ENCODE measurements at regions of chr12 and their contacts with region 1.

Region 1: DNA sequence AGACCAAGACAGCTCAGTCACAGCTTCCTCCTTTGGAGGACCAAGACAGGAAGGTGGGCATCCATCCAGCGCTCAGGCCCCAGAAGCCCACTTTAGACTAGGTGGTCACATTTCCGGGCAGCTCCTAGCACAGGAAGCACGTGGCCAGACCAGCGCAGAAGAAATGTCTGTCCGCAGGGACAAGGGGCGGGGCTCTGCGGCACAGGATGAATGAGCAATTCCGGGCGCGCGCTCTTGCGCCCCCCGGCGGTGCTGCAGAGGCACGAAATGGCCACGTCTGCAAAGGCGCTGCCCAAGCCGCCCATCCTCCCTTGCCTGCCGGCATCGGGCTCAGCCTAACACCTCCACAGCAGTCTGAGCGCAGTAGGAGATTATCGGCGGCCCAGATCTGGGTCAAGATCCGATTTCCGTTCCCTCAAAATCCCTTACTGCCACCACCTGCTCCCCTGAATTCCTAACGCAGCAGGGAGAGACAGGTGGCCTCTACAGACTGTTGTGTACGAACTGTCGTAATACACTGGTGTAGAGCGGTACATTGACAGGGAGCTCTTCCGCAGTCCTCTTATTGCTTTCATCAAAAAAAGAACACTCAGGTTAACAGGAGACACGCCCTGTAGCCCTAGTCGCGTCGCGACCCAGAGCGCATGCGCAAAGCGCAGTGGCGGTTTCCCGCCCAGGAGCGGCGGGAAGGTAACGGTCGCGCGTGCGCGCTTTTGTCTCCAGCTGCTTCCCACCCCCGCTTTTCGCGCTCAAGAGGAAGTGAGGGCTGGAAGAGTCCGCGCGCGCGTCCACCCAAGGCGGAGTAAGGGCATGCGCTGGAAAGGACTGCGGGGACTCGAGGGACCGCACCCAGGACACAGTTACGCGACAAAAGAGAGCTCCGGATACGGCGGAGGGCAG is 794 bp downstream of the TUBA1B start:
- DNase-seq: peak; percentile 85 to 98 (median 93)
- ATAC-seq: peak; percentile 75
- H3K4me3 ChIP-seq: peak overlapping the region; percentile 91
- H3K4me3 Mint-ChIP-seq: peak overlapping the region; percentile 99
- H3K27ac ChIP-seq: peak overlapping the region; percentile 94 to 98
- H3K27ac Mint-ChIP-seq: peak overlapping the region; percentile 98
- H3K4me1 ChIP-seq: peaks cover 33% of the 10 kb centered on the region
- H3K4me1 Mint-ChIP-seq: peaks cover 52% of the 10 kb centered on the region
- H3K27me3 ChIP-seq: no peaks in the 10 kb centered on the region
- H3K27me3 Mint-ChIP-seq: no peaks in the 10 kb centered on the region
- CTCF ChIP-seq: peak; percentile 90

Region 2: DNA sequence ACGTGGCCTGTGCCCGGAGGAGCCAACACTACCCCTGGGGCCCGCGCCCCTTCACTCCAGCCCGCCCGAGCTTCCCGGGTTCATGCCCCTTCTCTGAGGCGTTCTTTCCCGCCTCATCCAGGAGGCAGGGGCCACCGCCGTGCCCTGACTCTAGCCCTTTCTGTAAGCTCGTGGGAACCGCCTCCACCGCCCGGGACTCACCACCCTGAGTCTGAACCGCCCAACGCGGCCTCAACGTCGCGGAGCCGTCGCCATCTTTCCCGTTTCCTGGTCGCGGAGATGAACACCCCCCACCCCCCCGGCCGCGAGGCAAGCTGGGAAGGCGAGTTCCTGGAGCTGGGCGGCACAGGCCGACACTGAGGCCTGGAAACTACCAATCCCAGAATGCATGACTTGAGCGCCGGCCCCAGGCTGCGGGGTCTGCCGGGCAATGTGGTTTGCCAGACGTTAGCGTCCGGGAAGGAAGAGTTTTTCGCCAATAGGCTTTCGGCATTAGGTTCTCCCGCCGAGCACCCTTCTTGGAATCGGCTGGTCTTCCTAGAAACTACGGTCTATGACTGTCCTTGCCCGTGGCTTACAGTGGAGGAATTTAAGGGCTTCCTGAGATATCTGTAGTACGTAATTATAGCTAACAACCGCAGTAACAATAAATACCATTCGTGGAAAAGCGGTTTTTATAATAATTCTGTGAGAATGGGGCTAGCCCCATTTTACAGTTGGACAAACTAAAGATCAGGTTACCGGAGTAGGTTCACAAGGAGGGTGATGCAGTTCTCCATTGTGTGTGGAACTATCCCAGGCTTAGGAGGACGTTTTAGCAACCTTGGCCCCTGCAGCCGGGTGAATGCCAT is 278.3 kb before region 1 on chr12 and contains the start of gene DDX23:
- CTCF ChIA-PET with region 1: interaction called, 5 read pairs
- POLR2A ChIA-PET with region 1: interaction called, 16 read pairs
- intact Hi-C with region 1: no loop called
- DNase-seq: peak; percentile 82 to 98 (median 88)
- ATAC-seq: peak; percentile 93
- H3K4me3 ChIP-seq: peak within 1 kb of the TSS; percentile 81
- H3K4me3 Mint-ChIP-seq: peak within 1 kb of the TSS; percentile 98
- H3K27ac ChIP-seq: peak within 1 kb of the TSS; percentile 83 to 94
- H3K27ac Mint-ChIP-seq: peak within 1 kb of the TSS; percentile 93
- H3K4me1 ChIP-seq: peaks cover 47% of the 10 kb centered on the region
- H3K4me1 Mint-ChIP-seq: peaks cover 47% of the 10 kb centered on the region
- H3K27me3 ChIP-seq: no peaks in the 10 kb centered on the region
- H3K27me3 Mint-ChIP-seq: no peaks in the 10 kb centered on the region
- CTCF ChIP-seq: no peak
- total RNA-seq, gene DDX23: 69.4 to 76.5 TPM

Region 3: GRCh38 chr12:49069507-49070346 is 60.7 kb before region 1 on chr12 and contains the start of gene RHEBL1:
- CTCF ChIA-PET with region 1: interaction called, 6 read pairs
- POLR2A ChIA-PET with region 1: interaction called, 30 read pairs
- intact Hi-C with region 1: loop called in 1 of 2 experiments (anchors 5 kb)
- DNase-seq: peak; percentile 95 to 99 (median 97)
- ATAC-seq: peak; percentile 98
- H3K4me3 ChIP-seq: peak within 1 kb of the TSS; percentile 97
- H3K4me3 Mint-ChIP-seq: peak within 1 kb of the TSS; percentile 97
- H3K27ac ChIP-seq: peak within 1 kb of the TSS; percentile 61 to 76
- H3K27ac Mint-ChIP-seq: peak within 1 kb of the TSS; percentile 92
- H3K4me1 ChIP-seq: peaks cover 14% of the 10 kb centered on the region
- H3K4me1 Mint-ChIP-seq: peaks cover 21% of the 10 kb centered on the region
- H3K27me3 ChIP-seq: no peaks in the 10 kb centered on the region
- H3K27me3 Mint-ChIP-seq: peaks cover 3% of the 10 kb centered on the region
- CTCF ChIP-seq: no peak
- total RNA-seq, gene RHEBL1: 5.1 to 6.0 TPM

Region 4: GRCh38 chr12:49110464-49111155 is 19.8 kb before region 1 on chr12 and contains the start of gene LMBR1L:
- CTCF ChIA-PET with region 1: interaction called, 38 read pairs
- POLR2A ChIA-PET with region 1: interaction called, 178 read pairs
- intact Hi-C with region 1: loop called (anchors 1 to 2 kb)
- DNase-seq: peak; percentile 92 to 99 (median 95)
- ATAC-seq: peak; percentile 91
- H3K4me3 ChIP-seq: peak within 1 kb of the TSS; percentile 75
- H3K4me3 Mint-ChIP-seq: peak within 1 kb of the TSS; percentile 89
- H3K27ac ChIP-seq: peak within 1 kb of the TSS; percentile 85 to 94
- H3K27ac Mint-ChIP-seq: peak within 1 kb of the TSS; percentile 97
- H3K4me1 ChIP-seq: peaks cover 41% of the 10 kb centered on the region
- H3K4me1 Mint-ChIP-seq: peaks cover 35% of the 10 kb centered on the region
- H3K27me3 ChIP-seq: no peaks in the 10 kb centered on the region
- H3K27me3 Mint-ChIP-seq: no peaks in the 10 kb centered on the region
- CTCF ChIP-seq: peak; percentile 61
- total RNA-seq, gene LMBR1L: 401 to 418 TPM

Region 5: DNA sequence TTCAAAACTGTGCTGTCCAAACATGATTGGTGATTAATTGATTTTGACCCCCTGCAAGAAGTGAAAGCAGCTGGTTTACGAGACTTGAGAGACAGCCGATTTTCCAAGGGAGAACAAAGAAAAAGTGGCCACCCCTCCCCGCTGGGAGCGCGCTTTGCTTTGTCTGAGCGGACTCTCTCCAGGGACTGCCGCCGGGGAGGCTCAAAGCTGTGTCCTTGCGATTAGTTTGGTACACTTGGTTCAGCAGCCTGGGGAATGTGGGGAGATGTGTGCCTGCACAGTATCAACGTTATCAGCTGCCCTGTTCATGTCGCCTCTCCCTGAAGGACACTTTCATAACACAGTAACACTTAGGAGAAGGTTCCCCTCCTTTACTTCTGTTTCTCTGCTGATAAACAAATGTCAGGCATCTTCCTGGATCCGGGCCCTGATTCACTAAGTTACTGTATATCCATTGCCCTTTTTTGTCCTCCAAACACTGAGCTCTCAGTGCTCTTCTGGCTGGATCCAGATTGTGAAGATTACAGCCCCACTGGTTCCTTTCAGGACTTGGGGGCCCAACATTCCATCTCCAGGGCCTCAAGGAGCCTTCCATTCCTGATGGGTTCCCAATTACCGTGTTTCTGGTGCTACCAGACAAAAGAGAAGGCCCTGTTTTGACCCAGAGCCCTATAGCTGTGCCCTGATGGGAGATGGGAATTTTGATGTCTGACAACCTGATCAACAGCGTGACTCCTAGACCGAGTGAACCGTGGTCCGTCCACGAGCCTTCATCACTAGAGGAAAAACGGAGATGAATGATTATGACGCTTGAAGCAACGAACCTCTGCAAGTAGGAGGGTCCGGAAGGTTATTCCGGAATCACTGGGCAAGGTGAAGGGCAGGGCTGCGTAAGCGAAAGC is 102.8 kb after region 1 on chr12:
- CTCF ChIA-PET with region 1: interaction called, 20 read pairs
- POLR2A ChIA-PET with region 1: interaction called, 45 read pairs
- intact Hi-C with region 1: loop called (anchors 1 kb)
- DNase-seq: no peak
- ATAC-seq: no peak
- H3K4me3 ChIP-seq: no peak overlapping the region
- H3K4me3 Mint-ChIP-seq: peak overlapping the region; percentile 67
- H3K27ac ChIP-seq: peak overlapping the region in 1 of 2 donors; percentile 26
- H3K27ac Mint-ChIP-seq: peak overlapping the region; percentile 79
- H3K4me1 ChIP-seq: peaks cover 17% of the 10 kb centered on the region
- H3K4me1 Mint-ChIP-seq: peaks cover 15% of the 10 kb centered on the region
- H3K27me3 ChIP-seq: no peaks in the 10 kb centered on the region
- H3K27me3 Mint-ChIP-seq: no peaks in the 10 kb centered on the region
- CTCF ChIP-seq: no peak

Region 6: DNA sequence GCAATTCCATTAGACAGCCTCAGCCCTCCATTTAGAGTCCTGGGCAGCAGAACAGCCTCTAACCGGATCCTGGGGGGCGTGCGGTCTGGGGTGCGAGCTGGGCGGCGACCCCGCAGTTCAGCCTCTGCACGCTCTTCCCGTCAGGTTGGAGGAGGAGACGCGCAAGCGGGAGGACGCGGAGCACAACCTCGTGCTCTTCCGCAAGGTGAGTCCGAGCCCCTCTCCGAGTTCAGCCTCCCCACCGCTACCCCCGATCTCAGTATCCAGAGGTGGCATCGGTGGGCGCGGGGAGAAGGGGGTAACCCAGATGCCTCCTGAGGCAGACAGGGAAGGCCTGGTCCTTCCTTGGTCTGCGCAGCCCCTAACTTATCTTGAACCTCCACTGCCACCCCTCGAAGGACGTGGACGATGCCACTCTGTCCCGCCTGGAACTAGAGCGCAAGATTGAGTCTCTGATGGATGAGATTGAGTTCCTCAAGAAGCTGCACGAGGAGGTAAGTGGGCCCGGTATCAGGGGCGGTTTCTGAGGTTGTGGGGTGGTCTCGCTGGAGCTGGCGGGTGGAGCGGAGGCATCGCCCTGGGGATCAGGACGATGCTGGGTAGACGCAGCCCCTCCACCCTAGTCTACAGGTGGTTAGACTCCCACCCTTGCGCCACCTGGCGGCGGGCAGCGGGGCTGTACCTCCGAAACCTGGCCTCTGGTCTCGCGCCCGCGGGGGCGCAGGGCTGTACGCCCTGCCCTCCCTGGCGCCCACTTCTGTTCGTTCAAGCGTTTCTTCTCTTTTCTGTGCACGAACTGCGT is 165.8 kb after region 1 on chr12:
- CTCF ChIA-PET with region 1: no interaction called
- POLR2A ChIA-PET with region 1: no interaction called
- intact Hi-C with region 1: no loop called
- DNase-seq: peak; percentile 26 to 81 (median 58)
- ATAC-seq: peak; percentile 75
- H3K4me3 ChIP-seq: peak overlapping the region; percentile 33
- H3K4me3 Mint-ChIP-seq: peak overlapping the region; percentile 65
- H3K27ac ChIP-seq: no peak overlapping the region
- H3K27ac Mint-ChIP-seq: no peak overlapping the region
- H3K4me1 ChIP-seq: peaks cover 31% of the 10 kb centered on the region
- H3K4me1 Mint-ChIP-seq: peaks cover 23% of the 10 kb centered on the region
- H3K27me3 ChIP-seq: peaks cover 48 to 59% of the 10 kb centered on the region in 2 experiments
- H3K27me3 Mint-ChIP-seq: peaks cover 62% of the 10 kb centered on the region
- CTCF ChIP-seq: peak; percentile 61

Region 7: GRCh38 chr12:49366652-49367380 is 236.4 kb after region 1 on chr12:
- CTCF ChIA-PET with region 1: no interaction called
- POLR2A ChIA-PET with region 1: interaction called, 13 read pairs
- intact Hi-C with region 1: no loop called
- DNase-seq: peak; percentile 69 to 92 (median 81)
- ATAC-seq: peak; percentile 82
- H3K4me3 ChIP-seq: peak overlapping the region; percentile 88
- H3K4me3 Mint-ChIP-seq: peak overlapping the region; percentile 99
- H3K27ac ChIP-seq: peak overlapping the region; percentile 66 to 70
- H3K27ac Mint-ChIP-seq: peak overlapping the region; percentile 76
- H3K4me1 ChIP-seq: peaks cover 15% of the 10 kb centered on the region
- H3K4me1 Mint-ChIP-seq: peaks cover 30% of the 10 kb centered on the region
- H3K27me3 ChIP-seq: no peaks in the 10 kb centered on the region
- H3K27me3 Mint-ChIP-seq: no peaks in the 10 kb centered on the region
- CTCF ChIP-seq: no peak

Region 8: GRCh38 chr12:49470986-49471385 is 340.6 kb after region 1 on chr12:
- CTCF ChIA-PET with region 1: no interaction called
- POLR2A ChIA-PET with region 1: no interaction called
- intact Hi-C with region 1: no loop called
- DNase-seq: no peak
- ATAC-seq: no peak
- H3K4me3 ChIP-seq: no peak overlapping the region
- H3K4me3 Mint-ChIP-seq: no peak overlapping the region
- H3K27ac ChIP-seq: no peak overlapping the region
- H3K27ac Mint-ChIP-seq: no peak overlapping the region
- H3K4me1 ChIP-seq: no peaks in the 10 kb centered on the region
- H3K4me1 Mint-ChIP-seq: peaks cover 6% of the 10 kb centered on the region
- H3K27me3 ChIP-seq: no peaks in the 10 kb centered on the region
- H3K27me3 Mint-ChIP-seq: no peaks in the 10 kb centered on the region
- CTCF ChIP-seq: no peak